CD14-positive monocyte (primary cell): ENCODE measurements at regions of chr3 and their contacts with region 1.

Region 1: GRCh38 chr3:39288300-39288808 is 8.5 kb upstream of the CX3CR1 start:
- DNase-seq: peak; percentile 69 to 80 (median 76)
- H3K4me3 ChIP-seq: no peak overlapping the region
- H3K4me3 Mint-ChIP-seq: no peak overlapping the region
- H3K27ac ChIP-seq: no peak overlapping the region
- H3K27ac Mint-ChIP-seq: peak overlapping the region in 3 of 7 donors; percentile 26 to 80 (median 38)
- H3K4me1 ChIP-seq: peaks cover 21 to 23% of the 10 kb centered on the region in 2 donors
- H3K4me1 Mint-ChIP-seq: peaks cover 28% of the 10 kb centered on the region
- H3K27me3 ChIP-seq: no peaks in the 10 kb centered on the region
- H3K27me3 Mint-ChIP-seq: peaks cover 0 to 1% (median 1%) of the 10 kb centered on the region in 3 donors
- CTCF ChIP-seq: peak; percentile 94

Region 2: GRCh38 chr3:39000008-39000450 is 288.3 kb before region 1 on chr3:
- intact Hi-C with region 1: no loop called
- DNase-seq: peak in 2 of 3 donors; percentile 8 to 18
- H3K4me3 ChIP-seq: no peak overlapping the region
- H3K4me3 Mint-ChIP-seq: no peak overlapping the region
- H3K27ac ChIP-seq: no peak overlapping the region
- H3K27ac Mint-ChIP-seq: no peak overlapping the region
- H3K4me1 ChIP-seq: no peaks in the 10 kb centered on the region
- H3K4me1 Mint-ChIP-seq: no peaks in the 10 kb centered on the region
- H3K27me3 ChIP-seq: no peaks in the 10 kb centered on the region
- H3K27me3 Mint-ChIP-seq: peaks cover 0 to 3% (median 2%) of the 10 kb centered on the region in 3 donors
- CTCF ChIP-seq: peak; percentile 84

Region 3: DNA sequence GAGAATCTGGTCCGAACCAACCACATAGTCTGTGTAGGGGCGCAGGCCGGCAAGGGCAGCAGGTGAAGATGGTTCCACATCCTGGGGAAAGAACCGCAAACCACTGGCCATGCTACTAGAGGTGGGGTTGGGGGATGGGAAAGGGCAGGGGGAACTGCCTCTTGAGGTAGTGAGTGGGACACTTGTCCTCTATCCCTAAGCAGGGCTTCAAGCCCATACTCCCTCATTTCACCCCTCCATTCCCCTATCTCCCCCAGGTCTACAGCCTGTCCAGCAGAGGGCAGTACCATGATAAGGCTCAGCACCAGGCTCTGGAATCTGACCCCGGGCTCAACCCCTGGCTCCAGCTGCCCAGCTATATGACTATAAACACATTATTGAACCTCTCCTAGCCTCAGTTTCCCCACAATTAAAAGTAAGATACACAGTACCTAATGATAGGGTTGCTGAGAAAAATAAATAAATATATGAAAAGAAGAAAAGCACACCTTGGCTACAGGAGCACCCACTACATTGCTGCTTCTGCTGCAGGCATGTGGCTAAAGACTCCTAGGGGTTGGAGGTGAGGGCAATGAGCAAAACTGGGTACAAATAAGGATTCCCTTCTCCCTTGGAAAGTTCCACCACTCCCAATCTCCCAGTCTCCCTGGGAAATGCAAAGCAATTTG is 187.2 kb before region 1 on chr3:
- intact Hi-C with region 1: loop called (anchors 2 to 10 kb)
- DNase-seq: peak; percentile 38 to 53 (median 49)
- H3K4me3 ChIP-seq: no peak overlapping the region
- H3K4me3 Mint-ChIP-seq: no peak overlapping the region
- H3K27ac ChIP-seq: no peak overlapping the region
- H3K27ac Mint-ChIP-seq: peak overlapping the region in 3 of 7 donors; percentile 30 to 43 (median 41)
- H3K4me1 ChIP-seq: peaks cover 7 to 18% of the 10 kb centered on the region in 2 donors
- H3K4me1 Mint-ChIP-seq: peaks cover 33% of the 10 kb centered on the region
- H3K27me3 ChIP-seq: no peaks in the 10 kb centered on the region
- H3K27me3 Mint-ChIP-seq: peaks cover 0 to 1% (median 1%) of the 10 kb centered on the region in 3 donors
- CTCF ChIP-seq: peak; percentile 82

Region 4: DNA sequence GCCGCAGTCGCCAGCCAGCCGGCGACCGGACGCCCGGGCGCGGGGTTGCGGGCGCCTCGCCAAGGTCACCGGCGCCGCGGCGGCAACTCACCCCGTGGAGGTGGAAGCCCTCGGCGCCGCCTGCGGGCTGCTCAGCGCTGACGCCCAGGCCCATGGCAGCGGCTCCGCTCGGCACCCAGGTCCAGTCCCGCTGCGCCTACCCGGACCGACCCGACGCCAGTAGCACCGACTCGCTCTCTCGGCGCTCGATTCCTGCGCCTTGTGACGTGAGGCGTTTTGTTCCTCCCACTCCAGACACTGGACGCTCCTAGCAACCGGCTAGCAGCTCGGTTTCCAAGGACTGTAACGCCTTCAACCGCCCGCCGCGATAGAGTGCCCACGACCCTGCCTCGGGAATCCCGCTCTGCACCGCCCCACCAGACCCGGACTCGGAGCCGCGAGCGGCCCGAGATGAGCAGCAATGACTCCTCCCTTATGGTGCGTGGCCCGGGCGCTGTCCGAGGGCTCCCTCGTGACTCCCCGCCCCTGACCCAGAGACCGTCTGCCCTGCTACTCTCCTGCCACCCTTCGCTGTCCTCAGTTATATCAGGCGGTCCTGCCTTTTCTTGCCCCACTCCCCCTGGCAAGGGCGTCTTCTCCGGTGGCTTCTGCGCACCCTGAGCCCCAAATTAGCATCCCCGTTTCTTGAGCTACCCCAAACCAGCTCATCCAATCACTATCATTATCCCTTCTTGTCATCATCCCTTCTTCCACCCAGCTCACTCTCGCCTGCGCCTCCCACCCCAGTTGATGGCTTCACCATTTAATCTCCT is 180.8 kb before region 1 on chr3 and contains the starts of genes GORASP1 and TTC21A:
- intact Hi-C with region 1: loop called in 1 of 2 experiments (anchors 10 kb)
- DNase-seq: peak; percentile 71 to 82 (median 78)
- H3K4me3 ChIP-seq: peak within 1 kb of the TSS; percentile 64 to 85 (median 81)
- H3K4me3 Mint-ChIP-seq: peak within 1 kb of the TSS; percentile 96
- H3K27ac ChIP-seq: peak within 1 kb of the TSS; percentile 64 to 82
- H3K27ac Mint-ChIP-seq: peak within 1 kb of the TSS; percentile 89 to 98 (median 95)
- H3K4me1 ChIP-seq: peaks cover 29 to 42% of the 10 kb centered on the region in 2 donors
- H3K4me1 Mint-ChIP-seq: peaks cover 54% of the 10 kb centered on the region
- H3K27me3 ChIP-seq: no peaks in the 10 kb centered on the region
- H3K27me3 Mint-ChIP-seq: peaks cover 5 to 16% (median 12%) of the 10 kb centered on the region in 3 donors
- CTCF ChIP-seq: no peak
- polyA plus RNA-seq, gene GORASP1: 23.2 to 105 (median 31.2) TPM
- polyA plus RNA-seq, gene TTC21A: 0.67 to 12.9 (median 2.2) TPM

Region 5: DNA sequence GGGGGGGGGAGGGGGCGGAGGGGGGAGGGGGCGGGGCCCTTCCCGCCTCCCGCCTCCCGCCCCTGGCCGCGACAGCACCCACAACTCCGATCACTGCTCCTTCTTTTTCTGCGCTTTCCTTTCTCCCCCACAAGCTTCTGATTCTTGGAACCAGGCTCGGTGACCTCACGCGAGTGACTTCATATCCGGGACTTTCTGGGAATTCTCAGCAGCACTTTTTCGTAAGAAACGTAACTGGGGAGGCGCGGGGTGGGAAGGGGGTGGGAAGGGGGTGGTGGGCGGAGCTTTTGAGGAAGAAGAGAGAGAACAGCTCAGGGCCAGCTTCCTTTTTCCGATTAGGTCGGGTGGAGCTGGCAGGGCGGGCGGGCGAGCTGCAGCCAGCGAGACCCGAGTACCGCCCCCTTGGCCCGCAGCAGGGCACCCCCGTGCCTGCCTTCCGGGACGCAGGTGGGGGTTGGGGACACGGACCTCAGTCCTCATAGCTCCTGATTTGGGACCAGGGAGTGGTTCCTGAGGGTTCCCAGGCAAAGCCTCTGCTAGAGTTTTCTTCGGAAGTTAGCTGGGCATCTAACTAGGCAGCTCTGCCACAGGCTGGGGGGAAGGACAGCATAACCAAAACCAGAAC is 110.5 kb before region 1 on chr3:
- intact Hi-C with region 1: no loop called
- DNase-seq: peak; percentile 72 to 94 (median 79)
- H3K4me3 ChIP-seq: peak overlapping the region; percentile 41 to 79 (median 76)
- H3K4me3 Mint-ChIP-seq: peak overlapping the region; percentile 71 to 92
- H3K27ac ChIP-seq: peak overlapping the region; percentile 54 to 77
- H3K27ac Mint-ChIP-seq: peak overlapping the region; percentile 70 to 95 (median 93)
- H3K4me1 ChIP-seq: peaks cover 24 to 31% of the 10 kb centered on the region in 2 donors
- H3K4me1 Mint-ChIP-seq: peaks cover 31% of the 10 kb centered on the region
- H3K27me3 ChIP-seq: peaks cover 5 to 8% of the 10 kb centered on the region in 2 donors
- H3K27me3 Mint-ChIP-seq: peaks cover 17 to 19% (median 19%) of the 10 kb centered on the region in 3 donors
- CTCF ChIP-seq: no peak

Region 6: GRCh38 chr3:39189959-39190269 is 98.4 kb before region 1 on chr3:
- intact Hi-C with region 1: loop called (anchors 1 to 2 kb)
- DNase-seq: peak; percentile 64 to 78 (median 76)
- H3K4me3 ChIP-seq: no peak overlapping the region
- H3K4me3 Mint-ChIP-seq: no peak overlapping the region
- H3K27ac ChIP-seq: no peak overlapping the region
- H3K27ac Mint-ChIP-seq: peak overlapping the region in 2 of 7 donors; percentile 3 to 73
- H3K4me1 ChIP-seq: no peaks in the 10 kb centered on the region
- H3K4me1 Mint-ChIP-seq: peaks cover 8% of the 10 kb centered on the region
- H3K27me3 ChIP-seq: no peaks in the 10 kb centered on the region
- H3K27me3 Mint-ChIP-seq: peaks cover 0 to 4% (median 0%) of the 10 kb centered on the region in 3 donors
- CTCF ChIP-seq: peak; percentile 78

Region 7: GRCh38 chr3:39208463-39209055 is 79.8 kb before region 1 on chr3:
- intact Hi-C with region 1: loop called in 1 of 2 experiments (anchors 5 kb)
- DNase-seq: peak; percentile 41 to 74 (median 72)
- H3K4me3 ChIP-seq: no peak overlapping the region
- H3K4me3 Mint-ChIP-seq: no peak overlapping the region
- H3K27ac ChIP-seq: no peak overlapping the region
- H3K27ac Mint-ChIP-seq: peak overlapping the region in 3 of 7 donors; percentile 45 to 64 (median 54)
- H3K4me1 ChIP-seq: peaks cover 40 to 51% of the 10 kb centered on the region in 2 donors
- H3K4me1 Mint-ChIP-seq: peaks cover 43% of the 10 kb centered on the region
- H3K27me3 ChIP-seq: no peaks in the 10 kb centered on the region
- H3K27me3 Mint-ChIP-seq: peaks cover 0 to 3% (median 0%) of the 10 kb centered on the region in 3 donors
- CTCF ChIP-seq: peak; percentile 79

Region 8: DNA sequence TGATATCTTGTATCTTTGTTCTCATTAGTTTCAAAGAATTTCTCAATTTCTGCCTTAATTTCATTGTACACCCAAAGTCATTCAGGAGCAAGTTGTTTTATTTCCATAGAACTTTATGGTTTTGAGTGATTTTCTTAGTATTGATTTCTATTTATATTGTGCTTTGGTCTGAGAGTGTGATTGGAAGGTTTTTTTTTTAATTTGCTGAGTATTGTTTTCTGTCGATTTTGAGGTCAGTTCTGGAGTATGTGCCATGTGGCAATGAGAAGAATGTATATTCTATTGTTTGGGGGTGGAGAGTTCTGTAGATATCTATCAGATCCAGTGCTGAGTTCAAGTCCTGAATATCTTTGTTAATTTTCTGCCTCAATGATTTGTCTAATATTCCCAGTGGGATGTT is 317.5 kb after region 1 on chr3:
- intact Hi-C with region 1: no loop called
- DNase-seq: no peak
- H3K4me3 ChIP-seq: no peak overlapping the region
- H3K4me3 Mint-ChIP-seq: no peak overlapping the region
- H3K27ac ChIP-seq: no peak overlapping the region
- H3K27ac Mint-ChIP-seq: no peak overlapping the region
- H3K4me1 ChIP-seq: no peaks in the 10 kb centered on the region
- H3K4me1 Mint-ChIP-seq: no peaks in the 10 kb centered on the region
- H3K27me3 ChIP-seq: no peaks in the 10 kb centered on the region
- H3K27me3 Mint-ChIP-seq: peaks cover 0 to 5% (median 3%) of the 10 kb centered on the region in 3 donors
- CTCF ChIP-seq: no peak